ENCODE measurements at regions of chr2 and their contacts with region 1.

Region 1: GRCh38 chr2:98749066-98749450 is 18.1 kb upstream of the MGAT4A start:
- H3K4me3 Mint-ChIP-seq: peak overlapping the region; percentile 69
- H3K27ac Mint-ChIP-seq: peak overlapping the region; percentile 98
- H3K4me1 Mint-ChIP-seq: peaks cover 73% of the 10 kb centered on the region
- H3K27me3 Mint-ChIP-seq: no peaks in the 10 kb centered on the region

Region 2: GRCh38 chr2:98727369-98728087 is 21.5 kb before region 1 on chr2:
- intact Hi-C with region 1: no loop called
- H3K4me3 Mint-ChIP-seq: peak overlapping the region; percentile 49
- H3K27ac Mint-ChIP-seq: peak overlapping the region; percentile 4
- H3K4me1 Mint-ChIP-seq: peaks cover 56% of the 10 kb centered on the region
- H3K27me3 Mint-ChIP-seq: no peaks in the 10 kb centered on the region

Region 3: DNA sequence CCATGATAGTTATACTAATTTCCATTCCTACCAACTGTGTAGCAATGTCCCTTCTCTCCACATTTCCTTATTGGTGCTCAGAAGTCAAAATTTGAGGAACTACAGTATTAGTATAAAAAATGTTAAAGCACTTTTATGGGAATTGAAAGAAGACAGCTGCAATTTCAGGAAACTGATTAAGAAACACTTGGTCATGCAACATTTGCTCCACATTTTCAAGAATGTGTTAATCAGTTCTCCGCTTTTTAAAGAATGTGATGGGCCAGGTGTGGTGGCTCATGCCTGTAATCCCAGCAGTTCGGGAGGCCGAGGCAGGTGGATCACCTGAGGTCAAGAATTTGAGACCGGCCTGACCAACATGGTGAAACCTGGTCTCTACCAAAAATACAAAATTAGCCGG is 15.5 kb after region 1 on chr2:
- intact Hi-C with region 1: loop called (anchors 2 kb)
- H3K4me3 Mint-ChIP-seq: peak overlapping the region; percentile 61
- H3K27ac Mint-ChIP-seq: peak overlapping the region; percentile 89
- H3K4me1 Mint-ChIP-seq: peaks cover 95% of the 10 kb centered on the region
- H3K27me3 Mint-ChIP-seq: no peaks in the 10 kb centered on the region